PC-3 (cell line): ENCODE measurements at regions of chr18 and their contacts with region 1.

Region 1: GRCh38 chr18:8493141-8493540 is 116.1 kb upstream of the RAB12 start:
- DNase-seq: no peak
- ATAC-seq: no peak
- H3K4me3 ChIP-seq: no peak overlapping the region
- H3K27ac ChIP-seq: no peak overlapping the region
- H3K4me1 ChIP-seq: no peaks in the 10 kb centered on the region
- H3K27me3 ChIP-seq: peaks cover 27% of the 10 kb centered on the region
- CTCF ChIP-seq: no peak

Region 2: GRCh38 chr18:8153887-8154583 is 339.1 kb before region 1 on chr18:
- CTCF ChIA-PET with region 1: interaction called, 12 read pairs
- POLR2A ChIA-PET with region 1: no interaction called
- intact Hi-C with region 1: no loop called
- DNase-seq: peak; percentile 67
- ATAC-seq: peak; percentile 74
- H3K4me3 ChIP-seq: no peak overlapping the region
- H3K27ac ChIP-seq: no peak overlapping the region
- H3K4me1 ChIP-seq: peaks cover 10% of the 10 kb centered on the region
- H3K27me3 ChIP-seq: no peaks in the 10 kb centered on the region
- CTCF ChIP-seq: no peak

Region 3: GRCh38 chr18:8704361-8705279 is 211.5 kb after region 1 on chr18:
- CTCF ChIA-PET with region 1: no interaction called
- POLR2A ChIA-PET with region 1: no interaction called
- intact Hi-C with region 1: no loop called
- DNase-seq: peak; percentile 90
- ATAC-seq: peak; percentile 68
- H3K4me3 ChIP-seq: peak overlapping the region; percentile 75
- H3K27ac ChIP-seq: peak overlapping the region; percentile 51
- H3K4me1 ChIP-seq: peaks cover 49% of the 10 kb centered on the region
- H3K27me3 ChIP-seq: no peaks in the 10 kb centered on the region
- CTCF ChIP-seq: no peak